OCI-LY7 (cell line): ENCODE measurements at regions of chr12 and their contacts with region 1.

Region 1: GRCh38 chr12:47039756-47040155 is 39.7 kb upstream of the PCED1B start:
- DNase-seq: no peak
- H3K4me3 ChIP-seq: no peak overlapping the region
- H3K27ac ChIP-seq: no peak overlapping the region
- H3K4me1 ChIP-seq: no peaks in the 10 kb centered on the region
- CTCF ChIP-seq: no peak

Region 2: DNA sequence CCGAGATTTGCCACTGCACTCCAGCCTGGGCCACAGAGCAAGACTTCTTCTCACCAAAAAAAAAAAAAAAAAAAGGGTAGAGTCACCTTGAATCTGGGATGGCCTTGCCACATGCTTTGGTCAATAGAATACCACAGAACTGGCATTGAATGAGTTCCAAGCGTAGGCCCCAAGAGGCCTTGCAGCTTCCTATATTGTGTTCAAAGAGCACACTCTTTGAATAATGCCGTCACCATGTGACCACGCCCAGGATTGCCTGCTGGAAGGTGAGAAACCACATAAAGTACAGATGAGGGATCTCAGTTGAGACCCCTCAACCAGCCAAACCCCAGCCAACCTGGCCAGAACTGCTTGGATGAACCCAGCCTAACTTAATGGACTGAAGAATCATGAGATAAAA is 279.2 kb after region 1 on chr12:
- CTCF ChIA-PET with region 1: no interaction called
- POLR2A ChIA-PET with region 1: interaction called, 12 read pairs
- intact Hi-C with region 1: no loop called
- DNase-seq: no peak
- H3K4me3 ChIP-seq: no peak overlapping the region
- H3K27ac ChIP-seq: no peak overlapping the region
- H3K4me1 ChIP-seq: peaks cover 9% of the 10 kb centered on the region
- CTCF ChIP-seq: no peak